Heart right ventricle (tissue), 16 donors: ENCODE measurements at regions of chr3 and their contacts with region 1.

Region 1: DNA sequence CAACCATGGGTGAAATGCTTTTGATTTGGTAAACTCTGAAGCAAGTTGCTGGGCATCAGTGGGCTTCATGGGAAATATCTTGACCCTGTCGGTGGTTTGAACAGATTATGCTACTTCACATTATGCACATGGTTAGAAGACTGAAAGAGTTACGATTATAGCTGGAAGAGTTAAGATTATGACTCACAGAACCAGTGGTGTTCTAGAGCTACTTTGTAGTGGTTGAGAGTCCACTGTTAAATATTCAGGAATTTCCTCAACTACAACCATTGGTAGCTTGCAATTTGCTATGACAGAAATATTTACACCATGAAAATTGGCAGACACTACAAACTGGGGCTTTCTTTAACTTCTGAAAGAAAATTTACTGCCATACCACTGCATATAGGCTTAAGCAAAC is 99.3 kb downstream of the GADL1 start:
- DNase-seq: no peak
- ATAC-seq: no peak
- H3K4me3 ChIP-seq: no peak overlapping the region
- H3K27ac ChIP-seq: no peak overlapping the region
- H3K4me1 ChIP-seq: no peaks in the 10 kb centered on the region
- H3K27me3 ChIP-seq: no peaks in the 10 kb centered on the region
- CTCF ChIP-seq: no peak

Region 2: DNA sequence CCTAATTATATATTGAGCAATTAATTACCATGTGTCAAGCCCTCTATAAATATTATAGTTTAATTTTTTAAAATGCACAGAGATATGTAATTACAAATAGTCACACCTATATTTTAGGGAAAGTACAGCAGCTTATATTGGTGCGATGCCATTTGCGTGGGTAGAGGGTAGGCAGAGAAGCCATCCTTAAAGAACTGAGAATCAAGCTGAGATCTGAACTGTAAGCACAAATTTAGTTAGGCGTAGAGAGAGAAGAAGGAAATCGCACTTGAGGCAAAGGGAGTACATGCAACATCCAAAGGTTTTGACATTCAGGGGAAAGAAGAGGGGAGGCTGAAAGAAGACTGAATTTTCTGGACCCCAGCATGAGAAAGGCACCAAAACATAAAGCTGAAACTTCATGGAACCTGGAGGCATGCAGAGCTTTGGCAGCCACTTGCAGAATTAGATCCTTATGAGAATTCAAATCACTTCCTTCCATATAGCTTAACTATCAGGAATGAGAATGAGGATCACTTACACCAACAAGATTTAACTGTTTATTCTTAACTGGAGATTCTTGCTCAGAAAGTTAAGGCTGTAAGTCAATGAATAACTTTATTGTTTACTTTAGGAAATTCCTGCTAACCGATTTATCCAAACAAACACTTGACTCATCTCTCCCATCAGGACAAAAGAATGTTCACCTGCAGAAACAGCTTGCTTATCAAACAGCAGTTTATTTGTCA is 74.4 kb before region 1 on chr3:
- intact Hi-C with region 1: no loop called
- DNase-seq: no peak
- ATAC-seq: no peak
- H3K4me3 ChIP-seq: no peak overlapping the region
- H3K27ac ChIP-seq: no peak overlapping the region
- H3K4me1 ChIP-seq: no peaks in the 10 kb centered on the region
- H3K27me3 ChIP-seq: no peaks in the 10 kb centered on the region
- CTCF ChIP-seq: no peak

Region 3: GRCh38 chr3:30915782-30916181 is 120.6 kb after region 1 on chr3:
- intact Hi-C with region 1: loop called in 1 of 10 experiments (anchors 10 kb)
- DNase-seq: no peak
- ATAC-seq: no peak
- H3K4me3 ChIP-seq: no peak overlapping the region
- H3K27ac ChIP-seq: no peak overlapping the region
- H3K4me1 ChIP-seq: no peaks in the 10 kb centered on the region
- H3K27me3 ChIP-seq: no peaks in the 10 kb centered on the region
- CTCF ChIP-seq: no peak